Esophagus muscularis mucosa (tissue), 4 donors: ENCODE measurements at regions of chr14 and their contacts with region 1.

Region 1: DNA sequence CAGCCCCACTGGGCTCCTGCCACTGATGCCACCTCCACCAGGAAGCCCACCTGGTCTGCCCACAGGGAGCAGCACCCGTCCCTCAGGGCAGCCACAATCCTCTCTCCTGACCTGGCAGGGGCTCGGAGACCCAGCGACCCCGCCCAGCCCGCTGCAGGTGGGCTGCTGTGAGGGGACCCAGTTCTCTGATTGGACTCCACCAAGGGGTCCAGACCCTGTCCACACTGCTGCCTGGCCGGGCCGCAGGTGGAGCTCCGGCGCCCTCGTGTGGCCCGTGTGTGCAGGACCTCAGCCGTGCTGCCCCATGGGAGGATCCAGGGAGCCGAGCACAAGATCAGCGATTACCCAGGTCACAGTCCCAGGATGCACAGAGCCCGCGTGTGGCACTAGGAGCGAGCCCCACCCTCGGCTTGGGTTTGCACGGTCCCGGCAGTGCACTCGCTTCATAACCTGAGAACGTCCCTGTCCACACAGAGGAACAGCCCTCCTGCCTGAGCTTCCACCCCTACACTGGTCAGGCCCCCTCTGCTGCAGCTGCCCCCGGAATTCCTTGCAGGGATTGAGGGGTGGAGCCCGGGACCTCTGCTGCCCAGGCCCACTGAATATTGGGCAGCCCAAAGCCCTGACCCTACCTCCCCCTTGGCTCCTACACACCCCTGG is 35.4 kb upstream of the TMEM179 start:
- DNase-seq: no peak
- H3K4me3 ChIP-seq: no peak overlapping the region
- H3K27ac ChIP-seq: no peak overlapping the region
- H3K4me1 ChIP-seq: peaks cover 0 to 9% (median 3%) of the 10 kb centered on the region in 4 donors
- H3K27me3 ChIP-seq: peaks cover 0 to 59% (median 6%) of the 10 kb centered on the region in 4 donors
- CTCF ChIP-seq: peak; percentile 70 to 84 (median 76)
- EP300 ChIP-seq: no peak
- POLR2A ChIP-seq: no peak

Region 2: GRCh38 chr14:104094709-104095438 is 545.1 kb before region 1 on chr14:
- intact Hi-C with region 1: loop called (anchors 5 kb)
- DNase-seq: no peak
- H3K4me3 ChIP-seq: no peak overlapping the region
- H3K27ac ChIP-seq: no peak overlapping the region
- H3K4me1 ChIP-seq: peaks cover 0 to 6% (median 2%) of the 10 kb centered on the region in 4 donors
- H3K27me3 ChIP-seq: peaks cover 0 to 59% (median 6%) of the 10 kb centered on the region in 4 donors
- CTCF ChIP-seq: peak; percentile 54 to 84 (median 71)
- EP300 ChIP-seq: no peak
- POLR2A ChIP-seq: no peak

Region 3: DNA sequence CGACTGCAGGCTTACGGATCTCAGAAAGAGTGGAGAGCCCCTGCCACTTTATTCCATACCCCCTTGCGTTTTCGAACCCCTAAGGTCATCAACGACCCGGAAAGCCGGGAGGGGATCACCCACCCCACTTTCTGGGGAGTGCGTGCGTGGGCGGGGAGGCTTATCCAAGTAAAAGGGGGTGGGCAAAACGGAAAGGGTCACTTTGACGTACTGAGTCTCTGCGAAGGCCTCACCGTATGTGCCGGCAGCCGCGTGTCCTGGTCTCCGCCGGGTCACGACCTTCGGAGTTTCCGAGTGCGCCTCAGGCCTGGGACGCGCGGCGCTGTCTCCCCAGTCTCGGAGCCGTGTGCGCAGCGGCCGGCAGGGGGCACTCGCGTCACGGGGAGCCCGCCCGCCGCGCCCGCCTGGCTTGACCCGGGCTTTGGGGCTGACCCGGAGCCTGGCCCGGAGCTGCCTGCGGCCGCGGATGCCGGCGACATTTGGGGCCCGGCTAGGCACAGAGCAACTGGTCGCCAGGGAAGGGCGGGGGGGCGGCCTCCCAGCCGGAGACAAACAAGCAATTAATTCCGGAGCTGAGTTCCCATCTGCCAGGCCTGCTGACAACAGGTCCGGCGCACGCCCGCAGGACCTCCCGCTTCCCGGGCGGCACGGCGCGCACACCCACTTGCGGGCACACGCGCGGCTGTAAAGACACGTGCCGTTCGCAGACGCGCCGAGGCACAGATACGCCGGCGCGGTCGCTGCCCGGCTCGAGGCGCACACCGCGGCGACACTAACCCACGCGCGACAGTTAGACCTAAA is 502.5 kb before region 1 on chr14:
- intact Hi-C with region 1: loop called (anchors 5 kb)
- DNase-seq: no peak
- H3K4me3 ChIP-seq: peak overlapping the region; percentile 52 to 65 (median 56)
- H3K27ac ChIP-seq: peak overlapping the region in 3 of 4 donors; percentile 5 to 59 (median 19)
- H3K4me1 ChIP-seq: peaks cover 32 to 50% (median 46%) of the 10 kb centered on the region in 4 donors
- H3K27me3 ChIP-seq: peaks cover 7 to 84% (median 32%) of the 10 kb centered on the region in 4 donors
- CTCF ChIP-seq: peak; percentile 74 to 88 (median 86)
- EP300 ChIP-seq: no peak
- POLR2A ChIP-seq: no peak